ENCODE measurements at regions of chr5 and their contacts with region 1.

Region 1: DNA sequence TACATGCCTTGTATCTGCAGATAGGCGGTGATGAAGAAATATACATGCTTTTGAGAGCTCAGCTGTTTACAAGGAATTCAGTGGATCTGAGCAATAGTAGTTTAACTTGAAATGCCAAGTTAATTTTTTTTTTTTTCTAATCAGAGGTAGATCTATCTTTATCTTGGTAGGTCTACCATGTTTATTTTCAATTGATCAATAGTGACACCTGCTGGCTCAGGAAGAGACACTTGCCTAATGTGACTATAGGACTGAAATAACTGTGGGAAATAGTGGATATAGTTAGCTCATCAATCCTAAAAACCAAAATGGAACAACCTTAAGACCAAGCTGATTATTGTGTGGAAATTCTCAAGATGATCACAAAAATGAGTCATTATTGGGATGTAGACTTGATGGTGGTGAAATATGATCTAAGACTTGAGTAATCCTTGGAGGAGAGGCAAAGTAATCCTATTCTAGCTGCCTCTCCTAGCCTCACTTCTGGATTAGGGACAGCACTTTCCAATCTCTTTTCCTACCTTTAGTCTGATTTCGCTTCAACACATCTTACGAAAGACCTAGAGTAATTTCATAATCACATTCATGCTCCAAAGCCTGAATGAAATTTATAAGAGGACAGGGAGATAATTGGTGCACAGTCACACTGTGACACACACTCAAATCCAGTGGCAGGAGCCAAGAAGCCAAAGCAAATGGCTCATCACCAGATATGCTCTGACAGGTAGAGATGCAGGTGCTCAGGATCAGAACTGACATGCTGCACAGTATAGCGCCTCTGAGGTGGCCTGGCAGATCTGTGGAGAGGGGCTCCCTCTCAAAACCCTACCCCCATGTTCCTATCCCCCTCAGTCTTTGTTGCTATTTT is 156.3 kb downstream of the HMHB1 start:
- DNase-seq: peak; percentile 36
- H3K4me3 ChIP-seq: no peak overlapping the region
- H3K27ac ChIP-seq: no peak overlapping the region
- H3K4me1 ChIP-seq: no peaks in the 10 kb centered on the region
- CTCF ChIP-seq: peak; percentile 76

Region 2: GRCh38 chr5:142922223-142922952 is 1045.9 kb before region 1 on chr5:
- CTCF ChIA-PET with region 1: no interaction called
- POLR2A ChIA-PET with region 1: interaction called, 11 read pairs
- intact Hi-C with region 1: no loop called
- DNase-seq: peak; percentile 64
- H3K4me3 ChIP-seq: no peak overlapping the region
- H3K27ac ChIP-seq: no peak overlapping the region
- H3K4me1 ChIP-seq: no peaks in the 10 kb centered on the region
- CTCF ChIP-seq: peak; percentile 81

Region 3: GRCh38 chr5:143957455-143957854 is 10.8 kb before region 1 on chr5:
- CTCF ChIA-PET with region 1: no interaction called
- POLR2A ChIA-PET with region 1: interaction called, 5 read pairs
- intact Hi-C with region 1: loop called (anchors 1 kb)
- DNase-seq: no peak
- H3K4me3 ChIP-seq: no peak overlapping the region
- H3K27ac ChIP-seq: no peak overlapping the region
- H3K4me1 ChIP-seq: no peaks in the 10 kb centered on the region
- CTCF ChIP-seq: peak; percentile 61